MCF 10A (cell line): ENCODE measurements at regions of chr2 and their contacts with region 1.

Region 1: DNA sequence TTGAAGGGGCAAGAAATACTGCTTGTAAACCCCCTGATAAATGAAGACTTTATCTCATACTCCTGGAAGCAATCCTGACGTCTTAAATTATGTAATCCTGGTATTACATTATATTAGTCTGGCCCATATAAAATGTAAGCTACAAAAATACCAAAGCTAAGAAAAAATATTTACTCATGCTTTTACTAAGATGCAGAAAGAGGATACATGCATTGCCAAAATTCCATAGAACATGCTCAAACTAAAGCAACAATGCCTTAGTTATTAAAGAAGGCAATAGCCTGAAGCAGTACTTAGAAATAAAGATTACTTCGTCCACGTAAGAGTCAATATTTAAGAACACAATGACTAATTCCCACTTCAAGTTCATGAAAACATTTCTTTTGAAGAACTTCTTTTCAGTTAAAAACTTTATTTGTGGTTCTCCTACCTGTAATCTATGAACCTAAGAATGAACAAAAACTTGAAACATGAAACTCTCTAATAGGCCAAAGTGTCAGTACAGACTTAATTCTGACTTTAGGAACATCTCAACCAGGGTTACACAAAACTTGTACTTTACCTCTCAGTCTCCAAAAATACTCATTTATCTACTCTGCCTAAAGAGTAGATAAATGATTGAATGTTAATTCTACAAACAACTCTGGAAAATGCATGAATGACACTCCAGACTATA is 117.3 kb downstream of the THADA start:
- DNase-seq: no peak
- H3K4me3 Mint-ChIP-seq: no peak overlapping the region
- H3K27ac Mint-ChIP-seq: peak overlapping the region; percentile 37
- H3K4me1 Mint-ChIP-seq: peaks cover 46% of the 10 kb centered on the region
- H3K27me3 Mint-ChIP-seq: no peaks in the 10 kb centered on the region
- CTCF ChIP-seq: no peak

Region 2: GRCh38 chr2:43464590-43464989 is 14.0 kb before region 1 on chr2:
- CTCF ChIA-PET with region 1: interaction called, 6 read pairs
- POLR2A ChIA-PET with region 1: interaction called, 37 read pairs
- intact Hi-C with region 1: no loop called
- DNase-seq: peak; percentile 59
- H3K4me3 Mint-ChIP-seq: peak overlapping the region; percentile 35
- H3K27ac Mint-ChIP-seq: peak overlapping the region; percentile 95
- H3K4me1 Mint-ChIP-seq: peaks cover 56% of the 10 kb centered on the region
- H3K27me3 Mint-ChIP-seq: no peaks in the 10 kb centered on the region
- CTCF ChIP-seq: no peak